ENCODE measurements at regions of chr10 and their contacts with region 1.

Region 1: GRCh38 chr10:59360605-59361405 is 1.5 kb downstream of the FAM13C start:
- DNase-seq: no peak
- ATAC-seq: no peak
- H3K4me3 ChIP-seq: no peak overlapping the region
- H3K4me3 Mint-ChIP-seq: no peak overlapping the region
- H3K27ac ChIP-seq: no peak overlapping the region
- H3K27ac Mint-ChIP-seq: no peak overlapping the region
- H3K4me1 ChIP-seq: peaks cover 0 to 5% of the 10 kb centered on the region in 2 experiments
- H3K4me1 Mint-ChIP-seq: peaks cover 6 to 13% (median 11%) of the 10 kb centered on the region in 3 donors
- H3K27me3 ChIP-seq: peaks cover 6 to 10% of the 10 kb centered on the region in 2 experiments
- H3K27me3 Mint-ChIP-seq: peaks cover 16 to 34% of the 10 kb centered on the region in 2 donors

Region 2: DNA sequence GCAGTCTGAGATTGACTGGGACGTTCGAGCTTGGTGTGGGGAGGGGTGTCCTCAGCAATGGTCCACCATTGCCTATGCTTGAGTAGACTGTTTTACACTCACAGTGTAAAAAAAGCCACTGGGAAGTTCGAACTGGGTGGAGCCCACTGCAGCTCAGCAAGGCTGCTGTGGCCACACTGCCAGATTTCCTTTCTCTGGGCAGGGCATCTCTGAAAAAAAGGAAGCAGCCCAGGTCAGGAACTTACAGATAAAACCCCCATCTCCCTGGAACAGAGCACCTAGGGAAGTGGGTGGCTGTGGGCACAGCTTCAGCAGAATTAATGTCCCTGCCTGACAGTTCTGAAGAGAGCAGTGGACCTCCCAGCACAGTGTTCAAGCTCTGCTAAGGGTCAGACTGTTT is 767.8 kb before region 1 on chr10:
- CTCF ChIA-PET with region 1: no interaction called
- POLR2A ChIA-PET with region 1: no interaction called
- DNase-seq: no peak
- ATAC-seq: no peak
- H3K4me3 ChIP-seq: no peak overlapping the region
- H3K4me3 Mint-ChIP-seq: no peak overlapping the region
- H3K27ac ChIP-seq: no peak overlapping the region
- H3K27ac Mint-ChIP-seq: no peak overlapping the region
- H3K4me1 ChIP-seq: no peaks in the 10 kb centered on the region
- H3K4me1 Mint-ChIP-seq: no peaks in the 10 kb centered on the region
- H3K27me3 ChIP-seq: peaks cover 0 to 17% of the 10 kb centered on the region in 2 experiments
- H3K27me3 Mint-ChIP-seq: peaks cover 4 to 7% of the 10 kb centered on the region in 2 donors

Region 3: GRCh38 chr10:58954176-58954915 is 406.5 kb before region 1 on chr10:
- CTCF ChIA-PET with region 1: no interaction called
- POLR2A ChIA-PET with region 1: interaction called in 1 of 2 experiments, 11 read pairs
- DNase-seq: no peak
- ATAC-seq: no peak
- H3K4me3 ChIP-seq: no peak overlapping the region
- H3K4me3 Mint-ChIP-seq: no peak overlapping the region
- H3K27ac ChIP-seq: no peak overlapping the region
- H3K27ac Mint-ChIP-seq: no peak overlapping the region
- H3K4me1 ChIP-seq: no peaks in the 10 kb centered on the region
- H3K4me1 Mint-ChIP-seq: no peaks in the 10 kb centered on the region
- H3K27me3 ChIP-seq: no peaks in the 10 kb centered on the region
- H3K27me3 Mint-ChIP-seq: peaks cover 0 to 4% of the 10 kb centered on the region in 2 donors

Region 4: GRCh38 chr10:59206253-59206652 is 154.6 kb before region 1 on chr10:
- CTCF ChIA-PET with region 1: no interaction called
- POLR2A ChIA-PET with region 1: no interaction called
- DNase-seq: no peak
- ATAC-seq: no peak
- H3K4me3 ChIP-seq: no peak overlapping the region
- H3K4me3 Mint-ChIP-seq: no peak overlapping the region
- H3K27ac ChIP-seq: no peak overlapping the region
- H3K27ac Mint-ChIP-seq: no peak overlapping the region
- H3K4me1 ChIP-seq: no peaks in the 10 kb centered on the region
- H3K4me1 Mint-ChIP-seq: no peaks in the 10 kb centered on the region
- H3K27me3 ChIP-seq: peaks cover 0 to 2% of the 10 kb centered on the region in 2 experiments
- H3K27me3 Mint-ChIP-seq: no peaks in the 10 kb centered on the region

Region 5: DNA sequence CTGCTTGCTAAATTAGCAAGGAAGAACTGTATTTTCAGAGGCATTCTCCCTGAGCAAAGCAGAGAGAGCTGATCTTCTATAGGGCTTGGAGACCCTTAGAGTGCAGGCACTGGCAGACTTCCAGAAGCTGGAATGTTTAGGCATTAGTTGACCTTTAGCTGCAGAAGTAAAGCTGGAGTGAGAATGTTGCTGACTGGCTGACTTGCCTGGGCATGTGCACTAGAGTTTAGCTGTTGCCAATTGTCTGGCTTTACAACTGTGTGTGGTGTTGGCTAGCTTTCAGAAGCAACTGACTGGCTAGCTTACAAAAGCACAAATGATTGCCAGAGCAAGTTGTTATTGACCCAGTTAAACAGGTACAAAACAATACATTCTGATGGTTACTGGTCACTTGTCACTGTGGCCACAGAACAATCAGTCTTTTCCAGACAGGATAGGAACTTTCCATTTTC is 23.6 kb before region 1 on chr10:
- CTCF ChIA-PET with region 1: no interaction called
- POLR2A ChIA-PET with region 1: no interaction called
- DNase-seq: no peak
- ATAC-seq: no peak
- H3K4me3 ChIP-seq: no peak overlapping the region
- H3K4me3 Mint-ChIP-seq: no peak overlapping the region
- H3K27ac ChIP-seq: no peak overlapping the region
- H3K27ac Mint-ChIP-seq: no peak overlapping the region
- H3K4me1 ChIP-seq: no peaks in the 10 kb centered on the region
- H3K4me1 Mint-ChIP-seq: no peaks in the 10 kb centered on the region
- H3K27me3 ChIP-seq: no peaks in the 10 kb centered on the region
- H3K27me3 Mint-ChIP-seq: peaks cover 0 to 2% of the 10 kb centered on the region in 2 donors

Region 6: DNA sequence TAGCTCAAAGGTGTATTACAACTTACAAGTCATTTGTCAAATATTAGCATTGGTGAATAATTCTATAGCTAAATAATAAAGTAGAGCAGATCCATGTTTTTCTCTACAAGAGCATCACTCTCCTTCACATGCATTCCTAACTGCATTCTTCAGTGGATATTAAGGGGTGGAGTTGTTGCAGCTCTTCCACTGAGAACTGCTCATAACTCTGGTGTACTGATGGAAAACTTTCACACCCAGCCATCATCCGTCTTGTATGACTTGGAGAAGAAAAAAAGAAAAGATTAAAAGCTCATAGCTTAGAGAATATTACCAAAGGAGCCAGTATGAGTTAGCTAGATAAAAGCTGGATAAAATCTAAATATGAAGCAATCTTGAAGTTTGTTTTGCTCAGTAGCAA is 11.7 kb after region 1 on chr10:
- CTCF ChIA-PET with region 1: no interaction called
- POLR2A ChIA-PET with region 1: no interaction called
- DNase-seq: no peak
- ATAC-seq: no peak
- H3K4me3 ChIP-seq: no peak overlapping the region
- H3K4me3 Mint-ChIP-seq: no peak overlapping the region
- H3K27ac ChIP-seq: no peak overlapping the region
- H3K27ac Mint-ChIP-seq: no peak overlapping the region
- H3K4me1 ChIP-seq: no peaks in the 10 kb centered on the region
- H3K4me1 Mint-ChIP-seq: no peaks in the 10 kb centered on the region
- H3K27me3 ChIP-seq: no peaks in the 10 kb centered on the region
- H3K27me3 Mint-ChIP-seq: no peaks in the 10 kb centered on the region

Region 7: GRCh38 chr10:59387951-59388670 is 27.3 kb after region 1 on chr10:
- CTCF ChIA-PET with region 1: no interaction called
- POLR2A ChIA-PET with region 1: interaction called in 1 of 2 experiments, 10 read pairs
- DNase-seq: no peak
- ATAC-seq: no peak
- H3K4me3 ChIP-seq: no peak overlapping the region
- H3K4me3 Mint-ChIP-seq: no peak overlapping the region
- H3K27ac ChIP-seq: no peak overlapping the region
- H3K27ac Mint-ChIP-seq: no peak overlapping the region
- H3K4me1 ChIP-seq: no peaks in the 10 kb centered on the region
- H3K4me1 Mint-ChIP-seq: no peaks in the 10 kb centered on the region
- H3K27me3 ChIP-seq: no peaks in the 10 kb centered on the region
- H3K27me3 Mint-ChIP-seq: no peaks in the 10 kb centered on the region

Measured in T-cell (primary cell).